ENCODE measurements at regions of chr19 and their contacts with region 1.

Region 1: GRCh38 chr19:42244347-42245220 is 2.2 kb upstream of the GSK3A start:
- DNase-seq: peak; percentile 97
- ATAC-seq: peak; percentile 56
- H3K4me3 Mint-ChIP-seq: peak overlapping the region; percentile 90
- H3K27ac Mint-ChIP-seq: peak overlapping the region; percentile 95
- H3K4me1 Mint-ChIP-seq: peaks cover 30% of the 10 kb centered on the region
- H3K27me3 Mint-ChIP-seq: no peaks in the 10 kb centered on the region

Region 2: GRCh38 chr19:42199440-42200115 is 45.0 kb before region 1 on chr19:
- CTCF ChIA-PET with region 1: interaction called, 10 read pairs
- DNase-seq: peak; percentile 94
- ATAC-seq: peak; percentile 70
- H3K4me3 Mint-ChIP-seq: peak overlapping the region; percentile 69
- H3K27ac Mint-ChIP-seq: peak overlapping the region; percentile 96
- H3K4me1 Mint-ChIP-seq: peaks cover 76% of the 10 kb centered on the region
- H3K27me3 Mint-ChIP-seq: no peaks in the 10 kb centered on the region

Region 3: GRCh38 chr19:42219812-42220750 is 24.5 kb before region 1 on chr19 and contains the start of gene ZNF526:
- CTCF ChIA-PET with region 1: interaction called, 10 read pairs
- DNase-seq: peak; percentile 99
- ATAC-seq: peak; percentile 87
- H3K4me3 Mint-ChIP-seq: peak within 1 kb of the TSS; percentile 98
- H3K27ac Mint-ChIP-seq: peak within 1 kb of the TSS; percentile 94
- H3K4me1 Mint-ChIP-seq: peaks cover 65% of the 10 kb centered on the region
- H3K27me3 Mint-ChIP-seq: no peaks in the 10 kb centered on the region
- total RNA-seq, gene ZNF526: 21.9 to 24.4 TPM

Region 4: DNA sequence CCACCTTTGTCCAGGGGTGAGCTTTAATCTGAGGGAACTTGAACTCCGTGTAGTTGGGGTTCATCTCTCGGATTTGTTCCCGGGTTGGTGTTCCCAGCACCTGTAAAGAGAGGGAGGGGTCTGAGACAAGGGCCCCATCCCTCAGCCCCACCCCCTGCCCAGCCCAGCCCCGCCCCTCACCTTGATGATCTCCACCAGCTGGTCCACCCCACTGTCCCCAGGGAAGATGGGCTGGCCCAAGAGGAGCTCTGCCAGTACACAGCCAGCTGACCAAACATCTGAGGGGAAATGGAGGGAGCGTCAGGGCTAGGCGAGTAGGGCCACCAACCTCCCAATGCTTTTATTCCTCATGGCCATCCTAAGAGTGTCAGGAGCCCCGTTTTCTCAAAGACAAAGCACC is 11.5 kb before region 1 on chr19:
- CTCF ChIA-PET with region 1: interaction called, 14 read pairs
- DNase-seq: no peak
- ATAC-seq: no peak
- H3K4me3 Mint-ChIP-seq: no peak overlapping the region
- H3K27ac Mint-ChIP-seq: no peak overlapping the region
- H3K4me1 Mint-ChIP-seq: peaks cover 5% of the 10 kb centered on the region
- H3K27me3 Mint-ChIP-seq: no peaks in the 10 kb centered on the region

Region 5: DNA sequence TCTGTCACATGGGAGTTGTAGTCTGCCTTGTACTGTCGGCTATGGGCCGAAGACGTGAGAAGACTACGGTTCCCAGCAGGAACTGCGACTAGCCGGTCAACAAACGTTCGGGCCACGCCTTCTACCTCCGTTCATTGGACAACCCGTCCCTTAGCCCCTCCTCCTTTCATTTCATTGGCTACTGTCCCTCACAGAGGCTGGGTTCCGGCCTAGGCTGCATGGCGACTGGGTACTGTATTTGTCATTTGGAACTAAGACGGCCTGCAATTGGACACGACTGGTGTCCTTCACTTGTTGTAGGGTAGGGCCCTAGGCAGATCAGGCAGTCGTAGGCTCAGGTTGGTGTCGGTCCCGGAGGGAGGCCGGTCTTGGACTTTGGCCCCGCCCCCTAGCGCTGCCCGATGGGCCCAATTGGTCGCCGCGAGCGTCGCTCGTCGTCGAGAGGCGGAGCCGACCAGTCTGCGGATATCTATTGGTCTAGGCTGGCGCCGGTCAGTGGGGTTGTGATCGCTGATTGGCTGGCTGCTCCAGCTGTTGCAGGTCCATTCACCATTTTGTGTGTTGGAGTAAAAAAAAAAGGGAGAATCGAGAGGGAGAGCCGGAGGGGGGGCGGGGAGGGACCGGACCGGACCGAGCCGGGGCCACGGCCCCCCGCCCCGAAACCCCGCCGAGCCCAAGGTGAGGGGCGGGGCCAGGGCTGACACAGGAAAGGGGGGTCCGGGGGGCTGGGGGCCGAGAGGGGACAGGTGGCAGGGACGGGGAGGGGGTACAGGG is 24.3 kb after region 1 on chr19 and contains the start of gene CIC:
- CTCF ChIA-PET with region 1: interaction called, 18 read pairs
- DNase-seq: peak; percentile 100
- ATAC-seq: peak; percentile 85
- H3K4me3 Mint-ChIP-seq: no peak within 1 kb of the TSS
- H3K27ac Mint-ChIP-seq: peak within 1 kb of the TSS; percentile 99
- H3K4me1 Mint-ChIP-seq: peaks cover 27% of the 10 kb centered on the region
- H3K27me3 Mint-ChIP-seq: no peaks in the 10 kb centered on the region
- total RNA-seq, gene CIC: 67.3 to 77.3 TPM